Endothelial cell of umbilical vein (primary cell): ENCODE measurements at regions of chr19 and their contacts with region 1.

Region 1: DNA sequence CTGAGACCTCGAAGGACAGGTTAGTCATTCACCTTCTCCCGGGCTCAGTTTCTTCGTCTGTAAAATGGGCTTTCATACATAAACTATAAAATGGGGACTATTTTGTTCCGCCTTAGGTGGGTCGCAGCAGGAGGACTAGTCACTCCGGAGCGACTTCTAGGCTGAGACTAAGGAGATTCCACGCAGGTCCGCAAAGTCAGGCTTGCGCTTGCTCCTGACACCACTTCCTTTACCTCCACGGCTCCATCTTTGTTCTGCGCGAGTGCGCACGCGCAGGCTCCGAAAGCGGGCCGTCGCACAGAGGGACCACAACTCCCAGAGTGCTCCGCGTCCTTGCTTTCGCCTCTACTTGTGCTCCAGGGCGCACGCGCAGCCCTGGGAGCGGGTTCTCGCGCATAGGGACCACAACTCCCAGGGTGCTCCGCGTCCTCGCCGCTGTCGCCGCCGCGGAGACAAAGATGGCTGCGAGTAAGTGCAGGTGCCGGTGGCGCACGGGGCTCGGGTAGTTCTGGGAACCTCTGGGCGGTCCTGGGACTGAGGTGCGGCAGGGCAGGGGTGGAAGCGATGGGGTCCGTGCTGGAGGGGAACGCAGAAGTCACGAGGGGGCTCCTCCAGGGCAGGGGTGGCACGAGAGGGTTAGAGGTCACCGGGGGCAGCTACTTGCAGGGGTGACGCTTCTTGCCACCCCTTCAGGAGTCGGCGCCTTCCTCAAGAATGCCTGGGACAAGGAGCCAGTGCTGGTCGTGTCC is at the start of gene NDUFA3:
- DNase-seq: peak; percentile 99
- H3K4me3 ChIP-seq: peak within 1 kb of the TSS; percentile 15 to 97 (median 57)
- H3K27ac ChIP-seq: no peak within 1 kb of the TSS
- H3K4me1 ChIP-seq: no peaks in the 10 kb centered on the region
- H3K27me3 ChIP-seq: no peaks in the 10 kb centered on the region
- CTCF ChIP-seq: no peak
- POLR2A ChIP-seq: peak; percentile 87
- total RNA-seq, gene NDUFA3: 119 and 132 TPM in 2 replicates

Region 2: DNA sequence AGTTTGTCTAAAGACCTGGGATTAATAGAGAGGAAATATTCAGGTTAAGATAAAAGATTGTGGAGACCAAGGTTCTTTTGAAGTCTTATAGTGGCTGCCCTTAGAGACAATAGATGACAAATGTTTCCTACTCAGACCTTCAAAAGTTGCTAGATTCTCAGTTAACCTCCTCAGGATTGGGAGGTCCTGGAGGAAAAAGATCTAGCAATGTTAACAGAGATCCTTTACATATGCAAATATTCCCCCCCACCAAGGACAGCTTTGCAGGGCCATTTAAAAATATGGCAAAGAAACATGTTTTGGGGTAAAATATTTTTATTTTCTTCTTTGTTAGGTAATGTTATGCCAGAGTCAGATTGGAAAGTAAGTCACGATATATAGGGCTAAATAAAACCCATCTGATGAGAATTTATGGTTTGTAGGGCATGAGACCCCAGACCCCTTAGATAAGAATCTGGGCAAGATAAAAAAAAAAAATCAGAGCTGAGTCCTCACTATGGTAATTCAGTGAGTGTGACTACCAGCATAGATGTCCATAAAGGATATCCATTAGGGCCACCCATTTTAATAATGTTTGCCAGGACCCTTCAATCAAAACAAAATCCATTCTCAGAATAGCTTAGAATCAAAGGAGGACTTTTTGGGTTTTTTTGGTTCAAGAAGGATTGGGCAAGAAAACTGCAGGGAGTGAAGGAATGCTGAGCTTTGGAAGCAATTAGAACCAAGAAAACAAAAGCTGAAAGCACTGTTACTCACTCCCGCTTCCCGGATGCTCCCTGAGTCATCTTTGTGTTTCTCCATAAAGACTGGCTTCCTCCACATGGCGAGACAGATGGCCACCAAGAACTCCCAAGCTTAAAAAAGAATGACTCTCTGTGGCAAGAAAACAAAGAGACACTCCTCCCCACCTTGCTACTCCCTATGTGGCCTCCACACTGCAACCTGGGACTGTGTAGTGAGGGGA is 67.1 kb before region 1 on chr19:
- CTCF ChIA-PET with region 1: interaction called, 27 read pairs
- POLR2A ChIA-PET with region 1: no interaction called
- dilution Hi-C with region 1: no loop called
- intact Hi-C with region 1: loop called (anchors 2 kb)
- DNase-seq: peak; percentile 86
- H3K4me3 ChIP-seq: no peak overlapping the region
- H3K27ac ChIP-seq: peak overlapping the region; percentile 68
- H3K4me1 ChIP-seq: peaks cover 16% of the 10 kb centered on the region
- H3K27me3 ChIP-seq: no peaks in the 10 kb centered on the region
- CTCF ChIP-seq: no peak
- POLR2A ChIP-seq: no peak

Region 3: GRCh38 chr19:54137086-54137921 is 34.7 kb after region 1 on chr19 and contains the start of gene CNOT3:
- CTCF ChIA-PET with region 1: no interaction called
- POLR2A ChIA-PET with region 1: no interaction called
- dilution Hi-C with region 1: no loop called
- intact Hi-C with region 1: loop called (anchors 2 kb)
- DNase-seq: peak; percentile 100
- H3K4me3 ChIP-seq: peak within 1 kb of the TSS; percentile 66 to 98 (median 69)
- H3K27ac ChIP-seq: peak within 1 kb of the TSS; percentile 71
- H3K4me1 ChIP-seq: peaks cover 17% of the 10 kb centered on the region
- H3K27me3 ChIP-seq: no peaks in the 10 kb centered on the region
- CTCF ChIP-seq: no peak
- POLR2A ChIP-seq: peak; percentile 72
- total RNA-seq, gene CNOT3: 62.4 and 74.7 TPM in 2 replicates